ENCODE measurements at regions of chr4 and their contacts with region 1.

Region 1: GRCh38 chr4:23333946-23334878 is 555.6 kb downstream of the PPARGC1A start:
- DNase-seq: peak in 3 of 9 experiments; percentile 44 to 81 (median 60)
- ATAC-seq: peak; percentile 82
- H3K4me3 ChIP-seq: no peak overlapping the region
- H3K4me3 Mint-ChIP-seq: peak overlapping the region; percentile 23
- H3K27ac ChIP-seq: peak overlapping the region; percentile 9 to 23
- H3K27ac Mint-ChIP-seq: peak overlapping the region; percentile 65
- H3K4me1 ChIP-seq: peaks cover 27% of the 10 kb centered on the region
- H3K4me1 Mint-ChIP-seq: peaks cover 29% of the 10 kb centered on the region
- H3K27me3 ChIP-seq: no peaks in the 10 kb centered on the region
- H3K27me3 Mint-ChIP-seq: no peaks in the 10 kb centered on the region
- CTCF ChIP-seq: no peak

Region 2: DNA sequence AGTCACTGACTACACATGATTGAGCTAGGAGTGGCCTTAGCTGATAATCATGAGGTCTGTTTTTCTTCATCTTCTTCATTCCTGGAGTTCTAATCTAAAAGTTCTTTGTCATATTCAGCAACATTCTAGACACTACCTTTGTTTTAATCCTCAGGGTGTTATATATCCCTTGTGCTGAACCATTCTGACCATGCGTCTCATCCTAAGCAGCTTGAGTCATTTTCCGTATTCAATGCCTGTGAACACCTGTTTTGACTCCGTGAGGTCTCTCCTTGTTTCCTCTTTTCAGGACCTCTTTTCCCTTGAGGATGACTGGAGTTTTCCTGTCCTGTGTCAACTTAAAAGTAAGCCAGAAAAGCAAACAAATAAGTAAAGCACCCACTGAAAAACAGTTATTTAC is 43.6 kb before region 1 on chr4:
- CTCF ChIA-PET with region 1: no interaction called
- POLR2A ChIA-PET with region 1: no interaction called
- intact Hi-C with region 1: loop called in 1 of 2 experiments (anchors 5 kb)
- DNase-seq: no peak
- ATAC-seq: no peak
- H3K4me3 ChIP-seq: no peak overlapping the region
- H3K4me3 Mint-ChIP-seq: no peak overlapping the region
- H3K27ac ChIP-seq: no peak overlapping the region
- H3K27ac Mint-ChIP-seq: no peak overlapping the region
- H3K4me1 ChIP-seq: no peaks in the 10 kb centered on the region
- H3K4me1 Mint-ChIP-seq: peaks cover 6% of the 10 kb centered on the region
- H3K27me3 ChIP-seq: no peaks in the 10 kb centered on the region
- H3K27me3 Mint-ChIP-seq: no peaks in the 10 kb centered on the region
- CTCF ChIP-seq: no peak

Region 3: GRCh38 chr4:23392860-23393458 is 58.7 kb after region 1 on chr4:
- CTCF ChIA-PET with region 1: no interaction called
- POLR2A ChIA-PET with region 1: no interaction called
- intact Hi-C with region 1: no loop called
- DNase-seq: no peak
- ATAC-seq: no peak
- H3K4me3 ChIP-seq: no peak overlapping the region
- H3K4me3 Mint-ChIP-seq: no peak overlapping the region
- H3K27ac ChIP-seq: no peak overlapping the region
- H3K27ac Mint-ChIP-seq: no peak overlapping the region
- H3K4me1 ChIP-seq: no peaks in the 10 kb centered on the region
- H3K4me1 Mint-ChIP-seq: no peaks in the 10 kb centered on the region
- H3K27me3 ChIP-seq: no peaks in the 10 kb centered on the region
- H3K27me3 Mint-ChIP-seq: no peaks in the 10 kb centered on the region
- CTCF ChIP-seq: no peak